ENCODE measurements at regions of chr6 and their contacts with region 1.

Region 1: GRCh38 chr6:149393002-149393679 is 6.9 kb upstream of the SUMO4 start:
- DNase-seq: no peak
- H3K4me3 Mint-ChIP-seq: no peak overlapping the region
- H3K27ac Mint-ChIP-seq: no peak overlapping the region
- H3K4me1 Mint-ChIP-seq: peaks cover 66% of the 10 kb centered on the region
- H3K27me3 Mint-ChIP-seq: no peaks in the 10 kb centered on the region

Region 2: DNA sequence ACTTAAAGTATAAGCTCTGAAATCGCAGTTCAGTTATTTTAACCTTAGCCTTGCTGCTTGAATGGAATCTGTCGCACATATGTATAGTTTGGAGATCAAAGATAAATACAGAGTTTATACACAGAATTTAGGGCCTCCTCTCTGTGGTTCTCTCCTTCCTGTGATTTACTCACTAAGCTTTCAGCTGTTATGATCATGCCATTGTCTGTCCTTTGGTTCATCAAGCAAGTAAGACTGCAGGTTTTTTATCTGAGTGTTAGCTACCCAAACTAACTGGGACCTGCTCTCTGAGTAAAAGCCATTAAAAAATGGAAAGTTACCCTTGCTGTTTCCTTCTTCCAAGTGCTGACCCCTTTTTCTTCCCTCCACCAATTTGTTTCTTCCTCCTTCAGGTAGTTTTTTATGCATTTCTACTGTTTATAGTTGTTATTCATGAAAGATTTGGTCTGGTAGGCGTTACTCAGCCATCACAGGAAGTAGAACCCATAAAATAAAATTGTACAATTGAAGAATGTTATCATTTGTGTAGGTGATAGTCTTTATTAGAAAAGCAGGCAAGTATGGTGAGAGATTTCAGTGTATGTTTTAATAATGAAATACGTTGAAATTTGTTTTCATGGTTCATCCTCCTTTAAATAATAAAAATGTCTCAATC is 26.7 kb before region 1 on chr6:
- CTCF ChIA-PET with region 1: no interaction called
- intact Hi-C with region 1: no loop called
- DNase-seq: no peak
- H3K4me3 Mint-ChIP-seq: no peak overlapping the region
- H3K27ac Mint-ChIP-seq: no peak overlapping the region
- H3K4me1 Mint-ChIP-seq: peaks cover 49% of the 10 kb centered on the region
- H3K27me3 Mint-ChIP-seq: no peaks in the 10 kb centered on the region

Region 3: DNA sequence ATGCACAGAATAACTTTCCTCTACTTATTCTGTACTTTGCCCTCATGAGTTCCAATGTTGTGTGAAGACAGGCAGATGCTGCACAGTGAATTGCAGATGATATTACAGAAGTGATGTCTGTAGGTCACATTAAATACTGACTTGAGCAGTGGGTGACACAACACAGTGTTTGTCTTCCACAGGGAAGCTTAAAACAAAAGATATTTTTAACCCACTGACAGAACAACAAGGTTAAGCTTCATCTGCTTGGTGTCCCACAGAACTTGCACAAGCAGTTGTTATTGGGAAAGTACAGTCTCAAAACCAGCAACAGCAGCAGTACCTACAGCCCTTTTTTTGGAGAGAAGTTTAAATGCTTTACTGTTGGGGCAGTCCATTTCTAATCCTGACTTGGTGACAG is 17.4 kb after region 1 on chr6:
- CTCF ChIA-PET with region 1: no interaction called
- intact Hi-C with region 1: loop called (anchors 2 kb)
- DNase-seq: no peak
- H3K4me3 Mint-ChIP-seq: no peak overlapping the region
- H3K27ac Mint-ChIP-seq: no peak overlapping the region
- H3K4me1 Mint-ChIP-seq: peaks cover 19% of the 10 kb centered on the region
- H3K27me3 Mint-ChIP-seq: no peaks in the 10 kb centered on the region

Region 4: DNA sequence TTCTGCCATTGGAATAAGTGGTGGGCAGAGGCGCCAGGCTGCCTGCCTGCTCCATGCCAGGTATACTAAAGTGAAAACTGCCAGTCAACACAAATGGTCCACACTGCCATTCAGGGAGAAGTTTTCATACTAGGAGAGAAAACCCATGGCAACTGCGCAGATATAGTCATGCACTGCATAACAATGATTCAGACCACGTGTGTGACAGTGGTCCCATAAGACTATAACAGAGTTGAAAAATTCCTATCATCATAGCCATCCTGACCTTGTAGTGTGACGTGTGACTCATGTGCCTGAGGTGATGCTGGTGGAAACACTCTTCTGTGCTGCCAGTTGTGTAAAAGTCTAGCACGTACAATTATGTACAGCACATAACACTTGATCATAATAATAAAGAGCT is 66.6 kb after region 1 on chr6:
- CTCF ChIA-PET with region 1: no interaction called
- intact Hi-C with region 1: no loop called
- DNase-seq: no peak
- H3K4me3 Mint-ChIP-seq: no peak overlapping the region
- H3K27ac Mint-ChIP-seq: no peak overlapping the region
- H3K4me1 Mint-ChIP-seq: peaks cover 26% of the 10 kb centered on the region
- H3K27me3 Mint-ChIP-seq: no peaks in the 10 kb centered on the region

Measured in activated naive CD4-positive, alpha-beta T cell treated with anti-CD3 and anti-CD28 coated beads for 36 hours (primary cell).